Breast epithelium (tissue), 4 donors: ENCODE measurements at regions of chr10 and their contacts with region 1.

Region 1: GRCh38 chr10:126222736-126223511 is 165.4 kb downstream of the ADAM12 start:
- DNase-seq: no peak
- H3K4me3 ChIP-seq: no peak overlapping the region
- H3K27ac ChIP-seq: peak overlapping the region; percentile 55 to 85
- H3K4me1 ChIP-seq: peaks cover 0 to 6% of the 10 kb centered on the region in 2 donors
- H3K27me3 ChIP-seq: no peaks in the 10 kb centered on the region
- CTCF ChIP-seq: no peak
- POLR2A ChIP-seq: no peak

Region 2: DNA sequence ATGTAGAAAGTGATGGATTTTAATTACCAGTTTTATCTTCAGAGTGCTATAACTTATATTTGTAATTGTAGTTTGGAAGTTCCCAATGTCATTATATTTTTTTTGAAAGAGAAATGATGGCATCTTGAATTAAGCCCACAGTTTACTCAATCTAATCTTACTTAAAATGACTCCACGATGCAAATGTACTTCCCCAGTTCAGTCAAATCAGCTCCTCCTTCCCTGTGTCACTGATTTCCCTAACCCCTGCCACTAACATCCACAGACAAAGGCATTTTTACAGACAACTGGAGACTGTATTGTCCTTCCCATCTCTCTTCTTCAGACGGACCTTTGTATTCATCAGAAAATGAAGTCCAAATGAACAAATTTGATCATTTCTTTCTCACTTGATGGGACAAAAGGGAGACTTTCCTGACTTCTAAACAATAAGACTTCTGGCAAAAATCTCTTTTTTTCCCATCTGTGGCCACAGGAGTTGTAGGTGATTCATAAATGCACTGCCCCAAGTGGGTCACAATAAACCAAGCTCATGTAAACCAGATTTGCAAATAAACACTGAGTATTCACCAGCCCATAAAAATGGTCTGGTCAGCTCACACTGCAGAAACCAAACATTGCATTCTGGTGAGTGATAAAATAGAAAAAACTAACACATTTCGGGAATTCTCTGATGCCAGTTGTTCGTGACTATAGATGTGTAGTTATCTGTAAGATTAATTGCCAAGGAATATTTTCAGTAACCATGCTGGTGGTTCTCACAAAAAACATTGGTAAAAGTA is 163.7 kb before region 1 on chr10:
- intact Hi-C with region 1: loop called (anchors 5 kb)
- DNase-seq: no peak
- H3K4me3 ChIP-seq: no peak overlapping the region
- H3K27ac ChIP-seq: no peak overlapping the region
- H3K4me1 ChIP-seq: no peaks in the 10 kb centered on the region
- H3K27me3 ChIP-seq: no peaks in the 10 kb centered on the region
- CTCF ChIP-seq: no peak
- POLR2A ChIP-seq: no peak

Region 3: GRCh38 chr10:126274124-126274523 is 51.2 kb after region 1 on chr10:
- intact Hi-C with region 1: loop called (anchors 2 kb)
- DNase-seq: no peak
- H3K4me3 ChIP-seq: no peak overlapping the region
- H3K27ac ChIP-seq: no peak overlapping the region
- H3K4me1 ChIP-seq: no peaks in the 10 kb centered on the region
- H3K27me3 ChIP-seq: no peaks in the 10 kb centered on the region
- CTCF ChIP-seq: no peak
- POLR2A ChIP-seq: no peak